ENCODE measurements at regions of chr17 and their contacts with region 1.

Region 1: GRCh38 chr17:76681222-76682137 is 29.3 kb downstream of the MXRA7 start:
- DNase-seq: peak; percentile 67 to 75 (median 73)
- H3K4me3 ChIP-seq: no peak overlapping the region
- H3K4me3 Mint-ChIP-seq: peak overlapping the region in 4 of 8 donors; percentile 1 to 37 (median 19)
- H3K27ac ChIP-seq: no peak overlapping the region
- H3K27ac Mint-ChIP-seq: peak overlapping the region in 6 of 7 donors; percentile 30 to 90 (median 74)
- H3K4me1 ChIP-seq: peaks cover 46% of the 10 kb centered on the region
- H3K4me1 Mint-ChIP-seq: peaks cover 8 to 16% (median 14%) of the 10 kb centered on the region in 4 donors
- H3K27me3 ChIP-seq: no peaks in the 10 kb centered on the region
- H3K27me3 Mint-ChIP-seq: peaks cover 0 to 3% of the 10 kb centered on the region in 2 donors

Region 2: GRCh38 chr17:76523084-76524037 is 158.1 kb before region 1 on chr17:
- CTCF ChIA-PET with region 1: interaction called, 71 read pairs
- POLR2A ChIA-PET with region 1: interaction called, 8 read pairs
- intact Hi-C with region 1: loop called (anchors 1 kb)
- DNase-seq: peak; percentile 67 to 84 (median 78)
- H3K4me3 ChIP-seq: no peak overlapping the region
- H3K4me3 Mint-ChIP-seq: peak overlapping the region in 6 of 8 donors; percentile 32 to 79 (median 64)
- H3K27ac ChIP-seq: no peak overlapping the region
- H3K27ac Mint-ChIP-seq: peak overlapping the region; percentile 58 to 97 (median 88)
- H3K4me1 ChIP-seq: peaks cover 27% of the 10 kb centered on the region
- H3K4me1 Mint-ChIP-seq: peaks cover 15 to 51% (median 27%) of the 10 kb centered on the region in 4 donors
- H3K27me3 ChIP-seq: no peaks in the 10 kb centered on the region
- H3K27me3 Mint-ChIP-seq: no peaks in the 10 kb centered on the region

Region 3: GRCh38 chr17:76567634-76568432 is 113.6 kb before region 1 on chr17:
- CTCF ChIA-PET with region 1: interaction called, 77 read pairs
- POLR2A ChIA-PET with region 1: no interaction called
- intact Hi-C with region 1: no loop called
- DNase-seq: no peak
- H3K4me3 ChIP-seq: no peak overlapping the region
- H3K4me3 Mint-ChIP-seq: peak overlapping the region in 1 of 8 donors; percentile 23
- H3K27ac ChIP-seq: no peak overlapping the region
- H3K27ac Mint-ChIP-seq: peak overlapping the region; percentile 24 to 88 (median 60)
- H3K4me1 ChIP-seq: peaks cover 3% of the 10 kb centered on the region
- H3K4me1 Mint-ChIP-seq: peaks cover 24 to 47% (median 32%) of the 10 kb centered on the region in 4 donors
- H3K27me3 ChIP-seq: no peaks in the 10 kb centered on the region
- H3K27me3 Mint-ChIP-seq: no peaks in the 10 kb centered on the region

Region 4: GRCh38 chr17:76643553-76644148 is 37.8 kb before region 1 on chr17 and contains the start of gene ST6GALNAC1:
- CTCF ChIA-PET with region 1: interaction called, 18 read pairs
- POLR2A ChIA-PET with region 1: interaction called, 4 read pairs
- intact Hi-C with region 1: loop called (anchors 5 kb)
- DNase-seq: peak; percentile 28 to 66 (median 55)
- H3K4me3 ChIP-seq: peak within 1 kb of the TSS; percentile 36 to 59
- H3K4me3 Mint-ChIP-seq: peak within 1 kb of the TSS; percentile 81 to 96 (median 88)
- H3K27ac ChIP-seq: peak within 1 kb of the TSS; percentile 33
- H3K27ac Mint-ChIP-seq: peak within 1 kb of the TSS; percentile 67 to 91 (median 84)
- H3K4me1 ChIP-seq: peaks cover 36% of the 10 kb centered on the region
- H3K4me1 Mint-ChIP-seq: peaks cover 16 to 37% (median 34%) of the 10 kb centered on the region in 4 donors
- H3K27me3 ChIP-seq: no peaks in the 10 kb centered on the region
- H3K27me3 Mint-ChIP-seq: no peaks in the 10 kb centered on the region
- total RNA-seq, gene ST6GALNAC1: 12.7 to 14.6 TPM

Region 5: DNA sequence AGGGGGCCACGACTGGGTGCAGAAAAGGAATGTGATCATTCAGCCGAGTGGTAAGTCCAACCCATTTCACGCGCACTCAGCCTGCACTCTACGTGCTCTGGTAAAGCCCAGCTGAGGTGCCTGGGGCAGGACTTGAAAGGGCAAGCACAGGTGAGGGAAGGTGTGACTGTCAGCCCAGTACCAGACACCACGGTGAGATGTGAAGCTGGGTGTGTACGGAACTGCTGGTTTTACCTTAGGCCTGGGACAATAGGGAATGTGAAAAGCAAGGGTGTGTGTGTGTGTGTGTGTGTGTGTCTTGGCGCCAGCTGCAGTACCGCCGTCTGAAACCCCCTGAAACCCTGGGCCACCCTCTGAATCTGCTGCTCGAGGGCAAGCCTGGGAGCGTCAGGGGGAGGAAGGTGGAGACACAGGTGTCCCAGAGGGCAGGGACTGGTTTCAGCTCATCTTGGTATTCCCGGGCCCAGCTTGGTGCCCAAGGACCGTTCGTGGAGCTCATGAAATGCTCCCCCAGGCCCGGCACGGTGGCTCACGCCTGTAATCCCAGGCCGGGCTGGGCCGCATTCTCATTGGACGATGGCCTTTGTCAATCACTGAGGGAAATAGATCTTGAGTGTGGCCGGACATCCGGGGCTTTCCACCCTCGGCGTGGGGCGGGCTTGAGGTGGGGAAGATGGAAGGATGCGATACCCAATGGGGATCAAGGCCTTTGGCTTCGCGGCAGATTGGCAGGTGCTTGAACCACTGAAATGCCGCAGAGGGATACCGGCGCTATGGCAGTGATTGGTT is 10.2 kb before region 1 on chr17:
- CTCF ChIA-PET with region 1: interaction called, 29 read pairs
- POLR2A ChIA-PET with region 1: interaction called, 25 read pairs
- intact Hi-C with region 1: no loop called
- DNase-seq: peak; percentile 98 to 99 (median 99)
- H3K4me3 ChIP-seq: peak overlapping the region; percentile 75 to 83
- H3K4me3 Mint-ChIP-seq: peak overlapping the region; percentile 87 to 97 (median 92)
- H3K27ac ChIP-seq: peak overlapping the region; percentile 72
- H3K27ac Mint-ChIP-seq: peak overlapping the region; percentile 91 to 98 (median 97)
- H3K4me1 ChIP-seq: peaks cover 34% of the 10 kb centered on the region
- H3K4me1 Mint-ChIP-seq: peaks cover 22 to 32% (median 29%) of the 10 kb centered on the region in 4 donors
- H3K27me3 ChIP-seq: no peaks in the 10 kb centered on the region
- H3K27me3 Mint-ChIP-seq: no peaks in the 10 kb centered on the region

Measured in CD4-positive, alpha-beta memory T cell (primary cell).